CD4-positive, alpha-beta memory T cell (primary cell): ENCODE measurements at regions of chrX and their contacts with region 1.

Region 1: GRCh38 chrX:78945186-78945912 is at the start of gene P2RY10:
- DNase-seq: peak; percentile 70 to 80 (median 74)
- H3K4me3 ChIP-seq: peak within 1 kb of the TSS; percentile 59 to 86
- H3K4me3 Mint-ChIP-seq: peak within 1 kb of the TSS; percentile 87 to 99 (median 96)
- H3K27ac ChIP-seq: peak within 1 kb of the TSS; percentile 68
- H3K27ac Mint-ChIP-seq: peak within 1 kb of the TSS; percentile 95 to 100 (median 97)
- H3K4me1 ChIP-seq: peaks cover 45% of the 10 kb centered on the region
- H3K4me1 Mint-ChIP-seq: peaks cover 22 to 69% (median 36%) of the 10 kb centered on the region in 4 donors
- H3K27me3 ChIP-seq: no peaks in the 10 kb centered on the region
- H3K27me3 Mint-ChIP-seq: no peaks in the 10 kb centered on the region
- total RNA-seq, gene P2RY10: 87.4 to 104 TPM

Region 2: DNA sequence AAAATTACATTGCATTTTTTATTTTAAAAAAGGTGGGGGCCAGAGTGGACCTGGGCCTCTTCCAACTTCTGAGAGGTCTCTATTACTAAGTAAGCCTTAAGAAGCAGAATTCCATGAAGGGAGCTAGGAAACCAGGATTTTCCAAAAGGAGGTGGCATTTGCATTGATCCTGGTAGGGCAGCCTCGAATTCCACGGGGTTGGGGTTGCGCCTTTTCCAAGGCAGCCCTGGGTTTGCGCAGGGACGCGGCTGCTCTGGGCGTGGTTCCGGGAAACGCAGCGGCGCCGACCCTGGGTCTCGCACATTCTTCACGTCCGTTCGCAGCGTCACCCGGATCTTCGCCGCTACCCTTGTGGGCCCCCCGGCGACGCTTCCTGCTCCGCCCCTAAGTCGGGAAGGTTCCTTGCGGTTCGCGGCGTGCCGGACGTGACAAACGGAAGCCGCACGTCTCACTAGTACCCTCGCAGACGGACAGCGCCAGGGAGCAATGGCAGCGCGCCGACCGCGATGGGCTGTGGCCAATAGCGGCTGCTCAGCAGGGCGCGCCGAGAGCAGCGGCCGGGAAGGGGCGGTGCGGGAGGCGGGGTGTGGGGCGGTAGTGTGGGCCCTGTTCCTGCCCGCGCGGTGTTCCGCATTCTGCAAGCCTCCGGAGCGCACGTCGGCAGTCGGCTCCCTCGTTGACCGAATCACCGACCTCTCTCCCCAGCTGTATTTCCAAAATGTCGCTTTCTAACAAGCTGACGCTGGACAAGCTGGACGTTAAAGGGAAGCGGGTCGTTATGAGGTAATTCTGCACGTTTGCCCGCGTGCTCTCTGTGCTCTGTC is 841.5 kb before region 1 on chrX and contains the start of gene PGK1:
- CTCF ChIA-PET with region 1: no interaction called
- POLR2A ChIA-PET with region 1: no interaction called
- intact Hi-C with region 1: loop called (anchors 10 kb)
- DNase-seq: peak; percentile 90 to 96 (median 95)
- H3K4me3 ChIP-seq: peak within 1 kb of the TSS; percentile 62 to 90
- H3K4me3 Mint-ChIP-seq: peak within 1 kb of the TSS; percentile 87 to 94 (median 92)
- H3K27ac ChIP-seq: peak within 1 kb of the TSS; percentile 86
- H3K27ac Mint-ChIP-seq: peak within 1 kb of the TSS; percentile 92 to 98 (median 95)
- H3K4me1 ChIP-seq: peaks cover 34% of the 10 kb centered on the region
- H3K4me1 Mint-ChIP-seq: peaks cover 24 to 52% (median 36%) of the 10 kb centered on the region in 4 donors
- H3K27me3 ChIP-seq: no peaks in the 10 kb centered on the region
- H3K27me3 Mint-ChIP-seq: no peaks in the 10 kb centered on the region
- total RNA-seq, gene PGK1: 205 to 209 TPM

Region 3: DNA sequence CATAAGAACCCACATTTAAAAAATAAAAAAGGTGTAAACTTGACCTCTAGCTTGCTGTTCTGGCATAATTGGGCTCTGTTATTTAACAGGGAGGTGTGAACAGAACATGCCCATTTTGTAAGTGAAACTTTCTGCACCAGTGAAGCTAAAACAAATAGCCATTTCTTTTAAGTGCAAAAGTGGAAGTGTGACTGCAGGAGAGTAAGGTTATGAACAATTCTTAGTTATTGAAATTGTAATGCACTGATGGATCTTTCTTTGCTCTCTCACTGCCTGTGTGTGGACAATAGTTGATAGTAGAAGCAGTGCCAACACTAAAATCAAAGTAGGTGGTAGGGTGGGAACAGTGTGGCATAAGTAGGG is 12.4 kb after region 1 on chrX:
- CTCF ChIA-PET with region 1: no interaction called
- POLR2A ChIA-PET with region 1: interaction called, 26 read pairs
- intact Hi-C with region 1: loop called (anchors 1 kb)
- DNase-seq: no peak
- H3K4me3 ChIP-seq: no peak overlapping the region
- H3K4me3 Mint-ChIP-seq: peak overlapping the region in 6 of 8 donors; percentile 2 to 75 (median 36)
- H3K27ac ChIP-seq: peak overlapping the region; percentile 35
- H3K27ac Mint-ChIP-seq: peak overlapping the region; percentile 50 to 89 (median 79)
- H3K4me1 ChIP-seq: peaks cover 80% of the 10 kb centered on the region
- H3K4me1 Mint-ChIP-seq: peaks cover 46 to 77% (median 62%) of the 10 kb centered on the region in 4 donors
- H3K27me3 ChIP-seq: no peaks in the 10 kb centered on the region
- H3K27me3 Mint-ChIP-seq: no peaks in the 10 kb centered on the region

Region 4: DNA sequence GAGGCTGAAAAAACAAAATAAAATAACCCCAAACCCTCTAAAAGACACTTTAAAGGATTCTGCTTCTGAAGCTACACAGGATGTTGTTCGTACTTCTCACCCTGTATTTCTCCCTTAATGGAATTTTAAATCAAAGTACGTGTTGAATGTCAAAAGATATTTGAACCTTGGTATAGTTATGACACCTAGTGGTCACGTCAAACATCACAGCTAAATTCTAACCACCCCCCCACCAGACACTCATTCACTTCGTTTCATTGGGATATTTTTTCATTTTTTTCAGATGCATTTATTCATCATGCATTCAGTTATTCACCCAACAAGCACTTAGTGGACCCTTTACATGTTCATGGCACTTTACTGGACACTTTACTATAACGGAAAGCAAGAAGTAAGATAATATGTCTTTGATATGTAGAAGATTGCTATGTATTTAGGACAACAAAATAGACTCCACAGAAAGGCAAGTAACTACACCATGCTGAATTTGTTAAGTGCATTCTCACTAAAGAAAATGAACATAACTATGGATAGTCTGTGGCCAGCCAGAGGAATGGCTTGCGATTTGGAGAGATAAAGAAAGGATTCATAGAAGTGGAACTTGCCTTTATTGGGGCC is 136.7 kb after region 1 on chrX:
- CTCF ChIA-PET with region 1: interaction called, 9 read pairs
- POLR2A ChIA-PET with region 1: interaction called, 3 read pairs
- intact Hi-C with region 1: loop called (anchors 5 kb)
- DNase-seq: peak; percentile 43 to 72 (median 65)
- H3K4me3 ChIP-seq: peak overlapping the region; percentile 6 to 32
- H3K4me3 Mint-ChIP-seq: peak overlapping the region; percentile 51 to 82 (median 78)
- H3K27ac ChIP-seq: peak overlapping the region; percentile 31
- H3K27ac Mint-ChIP-seq: peak overlapping the region; percentile 77 to 94 (median 90)
- H3K4me1 ChIP-seq: peaks cover 40% of the 10 kb centered on the region
- H3K4me1 Mint-ChIP-seq: peaks cover 16 to 37% (median 25%) of the 10 kb centered on the region in 4 donors
- H3K27me3 ChIP-seq: no peaks in the 10 kb centered on the region
- H3K27me3 Mint-ChIP-seq: no peaks in the 10 kb centered on the region

Region 5: DNA sequence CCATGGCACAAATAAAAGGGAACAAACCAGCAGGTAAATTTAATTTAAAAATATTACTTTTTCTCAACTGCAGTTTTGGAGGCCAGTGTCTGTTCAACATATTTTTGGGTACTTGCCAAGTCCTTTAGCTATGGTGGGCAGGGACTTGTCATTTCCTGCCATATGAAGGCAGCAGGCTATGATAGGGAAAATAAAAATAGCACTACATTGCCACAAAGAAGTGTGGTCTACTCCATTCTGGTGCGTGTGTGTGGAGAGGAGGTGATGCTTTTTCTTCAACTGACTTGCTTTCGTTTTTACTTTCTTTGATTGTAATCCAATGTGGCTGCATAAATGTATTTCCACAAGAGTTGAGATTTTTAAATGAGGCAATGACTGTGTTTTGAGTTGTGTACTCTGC is 216.3 kb after region 1 on chrX:
- CTCF ChIA-PET with region 1: no interaction called
- POLR2A ChIA-PET with region 1: interaction called, 4 read pairs
- intact Hi-C with region 1: loop called (anchors 5 kb)
- DNase-seq: peak; percentile 73 to 85 (median 79)
- H3K4me3 ChIP-seq: peak overlapping the region; percentile 45 to 55
- H3K4me3 Mint-ChIP-seq: peak overlapping the region; percentile 75 to 97 (median 94)
- H3K27ac ChIP-seq: peak overlapping the region; percentile 51
- H3K27ac Mint-ChIP-seq: peak overlapping the region; percentile 87 to 98 (median 95)
- H3K4me1 ChIP-seq: peaks cover 90% of the 10 kb centered on the region
- H3K4me1 Mint-ChIP-seq: peaks cover 37 to 85% (median 53%) of the 10 kb centered on the region in 4 donors
- H3K27me3 ChIP-seq: no peaks in the 10 kb centered on the region
- H3K27me3 Mint-ChIP-seq: no peaks in the 10 kb centered on the region

Region 6: GRCh38 chrX:79412972-79413371 is 467.6 kb after region 1 on chrX:
- CTCF ChIA-PET with region 1: interaction called, 3 read pairs
- POLR2A ChIA-PET with region 1: interaction called, 3 read pairs
- intact Hi-C with region 1: loop called (anchors 5 kb)
- DNase-seq: peak in 4 of 5 donors; percentile 48 to 54 (median 50)
- H3K4me3 ChIP-seq: peak overlapping the region; percentile 23 to 34
- H3K4me3 Mint-ChIP-seq: peak overlapping the region; percentile 71 to 84 (median 82)
- H3K27ac ChIP-seq: peak overlapping the region; percentile 56
- H3K27ac Mint-ChIP-seq: peak overlapping the region; percentile 41 to 88 (median 82)
- H3K4me1 ChIP-seq: peaks cover 7% of the 10 kb centered on the region
- H3K4me1 Mint-ChIP-seq: peaks cover 18 to 35% (median 22%) of the 10 kb centered on the region in 4 donors
- H3K27me3 ChIP-seq: no peaks in the 10 kb centered on the region
- H3K27me3 Mint-ChIP-seq: no peaks in the 10 kb centered on the region